PC-3 (cell line): ENCODE measurements at regions of chr20 and their contacts with region 1.

Region 1: GRCh38 chr20:59948828-59949720 is 8.9 kb downstream of the FAM217B start:
- DNase-seq: peak; percentile 69
- ATAC-seq: peak; percentile 71
- H3K4me3 ChIP-seq: no peak overlapping the region
- H3K27ac ChIP-seq: no peak overlapping the region
- H3K4me1 ChIP-seq: no peaks in the 10 kb centered on the region
- H3K27me3 ChIP-seq: no peaks in the 10 kb centered on the region
- CTCF ChIP-seq: peak; percentile 86

Region 2: GRCh38 chr20:59802471-59803221 is 146.4 kb before region 1 on chr20:
- CTCF ChIA-PET with region 1: no interaction called
- POLR2A ChIA-PET with region 1: no interaction called
- intact Hi-C with region 1: no loop called
- DNase-seq: no peak
- ATAC-seq: no peak
- H3K4me3 ChIP-seq: no peak overlapping the region
- H3K27ac ChIP-seq: no peak overlapping the region
- H3K4me1 ChIP-seq: peaks cover 5% of the 10 kb centered on the region
- H3K27me3 ChIP-seq: no peaks in the 10 kb centered on the region
- CTCF ChIP-seq: no peak

Region 3: DNA sequence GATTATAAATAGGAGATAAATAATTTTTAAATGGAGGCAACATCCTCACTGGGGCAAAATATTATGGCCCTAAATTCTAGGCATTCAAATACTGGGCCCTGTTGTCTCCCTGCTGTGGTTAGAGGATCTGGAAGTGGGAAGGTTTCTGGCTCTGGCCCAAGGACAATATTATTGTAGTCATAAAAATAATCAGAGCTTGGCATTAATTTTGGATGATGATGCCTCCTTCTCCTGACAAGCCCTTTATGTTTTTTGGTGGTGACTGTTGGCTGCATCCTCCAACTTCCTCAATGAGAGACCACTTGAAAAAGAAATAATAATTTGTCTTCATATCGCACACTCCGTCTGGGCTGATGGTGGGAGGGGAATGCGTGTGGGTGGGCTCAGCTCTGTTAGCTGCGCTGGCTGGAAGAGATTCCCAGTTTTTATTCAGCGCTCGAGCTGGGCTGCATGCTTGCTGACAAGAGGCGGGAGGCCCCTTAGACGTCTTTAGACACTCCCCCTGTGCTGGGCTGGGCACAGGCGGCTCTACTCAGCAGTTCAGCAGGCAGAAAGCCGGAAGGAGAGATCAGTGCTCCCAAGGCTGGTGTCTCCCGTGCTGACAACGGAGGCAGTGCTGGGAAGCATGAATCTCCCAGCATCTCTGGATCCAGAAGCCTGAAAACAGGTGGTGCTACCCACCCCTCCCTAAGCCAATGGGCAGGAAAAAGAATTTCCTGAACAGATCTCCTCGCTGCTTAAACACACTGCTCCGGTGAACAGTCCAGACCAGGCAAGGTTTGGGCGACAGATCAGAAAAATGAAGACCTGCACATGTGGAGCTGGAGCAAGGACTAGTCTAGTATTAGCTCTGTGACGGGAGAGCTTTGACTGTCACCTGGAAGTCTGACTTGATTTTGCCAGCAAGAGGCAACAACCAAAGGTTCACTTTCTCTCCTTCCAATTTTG is 113.4 kb before region 1 on chr20:
- CTCF ChIA-PET with region 1: no interaction called
- POLR2A ChIA-PET with region 1: interaction called, 13 read pairs
- intact Hi-C with region 1: no loop called
- DNase-seq: peak; percentile 91
- ATAC-seq: peak; percentile 64
- H3K4me3 ChIP-seq: peak overlapping the region; percentile 76
- H3K27ac ChIP-seq: peak overlapping the region; percentile 53
- H3K4me1 ChIP-seq: peaks cover 77% of the 10 kb centered on the region
- H3K27me3 ChIP-seq: no peaks in the 10 kb centered on the region
- CTCF ChIP-seq: no peak

Region 4: DNA sequence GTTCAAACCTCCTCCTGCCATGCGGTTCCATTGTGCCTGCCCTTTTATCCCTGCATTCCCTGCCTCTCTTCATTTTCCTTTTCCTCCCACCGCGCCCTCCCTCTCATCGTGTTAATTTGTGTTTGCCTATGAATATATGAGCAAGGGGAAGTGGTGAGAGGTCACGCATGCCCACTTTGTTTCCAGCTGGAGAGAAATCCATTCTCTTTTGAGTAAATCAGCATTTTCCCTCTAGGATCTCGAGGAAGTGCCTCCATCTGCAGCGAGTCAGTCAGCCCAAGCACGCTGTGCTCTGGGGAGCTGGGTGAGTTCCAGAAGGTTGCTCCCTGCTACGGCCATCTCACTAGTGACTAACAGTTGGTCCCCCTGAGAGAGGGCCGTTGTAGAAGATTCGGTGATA is 52.0 kb after region 1 on chr20:
- CTCF ChIA-PET with region 1: no interaction called
- POLR2A ChIA-PET with region 1: no interaction called
- intact Hi-C with region 1: no loop called
- DNase-seq: peak; percentile 12
- ATAC-seq: peak; percentile 32; the same call in 1 of the 2 replicates
- H3K4me3 ChIP-seq: no peak overlapping the region
- H3K27ac ChIP-seq: no peak overlapping the region
- H3K4me1 ChIP-seq: peaks cover 16% of the 10 kb centered on the region; the same call in 1 of the 2 replicates
- H3K27me3 ChIP-seq: no peaks in the 10 kb centered on the region
- CTCF ChIP-seq: no peak

Region 5: GRCh38 chr20:60050158-60050947 is 101.3 kb after region 1 on chr20:
- CTCF ChIA-PET with region 1: no interaction called
- POLR2A ChIA-PET with region 1: no interaction called
- intact Hi-C with region 1: loop called (anchors 1 kb)
- DNase-seq: peak; percentile 79
- ATAC-seq: peak; percentile 79
- H3K4me3 ChIP-seq: no peak overlapping the region
- H3K27ac ChIP-seq: no peak overlapping the region
- H3K4me1 ChIP-seq: peaks cover 10% of the 10 kb centered on the region
- H3K27me3 ChIP-seq: peaks cover 24% of the 10 kb centered on the region
- CTCF ChIP-seq: peak; percentile 83